A673 (cell line): ENCODE measurements at regions of chr2 and their contacts with region 1.

Region 1: GRCh38 chr2:112714836-112715631 is 5.8 kb upstream of the NT5DC4 start:
- DNase-seq: no peak
- H3K4me3 ChIP-seq: no peak overlapping the region
- H3K27ac ChIP-seq: no peak overlapping the region
- H3K4me1 ChIP-seq: no peaks in the 10 kb centered on the region
- H3K27me3 ChIP-seq: no peaks in the 10 kb centered on the region
- CTCF ChIP-seq: no peak

Region 2: DNA sequence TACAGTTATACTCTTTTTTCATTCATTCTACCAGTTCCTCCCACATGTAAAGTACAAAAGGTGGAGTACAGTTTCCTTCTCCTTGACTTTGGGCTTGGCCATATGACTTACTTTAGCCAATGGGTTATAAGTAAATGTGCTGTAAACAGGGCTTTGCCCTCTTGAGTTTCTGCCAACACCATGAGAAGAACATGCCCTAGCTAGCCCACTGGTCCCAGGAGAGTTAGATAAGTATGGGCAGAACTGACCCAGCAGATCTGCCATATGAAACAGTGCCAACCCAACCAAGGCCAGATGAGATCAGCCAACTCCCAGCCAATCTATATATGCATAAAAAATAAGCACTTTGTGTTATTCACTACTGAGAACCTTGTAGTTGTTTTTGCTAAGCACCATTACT is 485.7 kb before region 1 on chr2:
- CTCF ChIA-PET with region 1: no interaction called
- POLR2A ChIA-PET with region 1: interaction called, 10 read pairs
- intact Hi-C with region 1: no loop called
- DNase-seq: peak; percentile 11
- H3K4me3 ChIP-seq: no peak overlapping the region
- H3K27ac ChIP-seq: no peak overlapping the region
- H3K4me1 ChIP-seq: peaks cover 11% of the 10 kb centered on the region
- H3K27me3 ChIP-seq: no peaks in the 10 kb centered on the region
- CTCF ChIP-seq: no peak

Region 3: DNA sequence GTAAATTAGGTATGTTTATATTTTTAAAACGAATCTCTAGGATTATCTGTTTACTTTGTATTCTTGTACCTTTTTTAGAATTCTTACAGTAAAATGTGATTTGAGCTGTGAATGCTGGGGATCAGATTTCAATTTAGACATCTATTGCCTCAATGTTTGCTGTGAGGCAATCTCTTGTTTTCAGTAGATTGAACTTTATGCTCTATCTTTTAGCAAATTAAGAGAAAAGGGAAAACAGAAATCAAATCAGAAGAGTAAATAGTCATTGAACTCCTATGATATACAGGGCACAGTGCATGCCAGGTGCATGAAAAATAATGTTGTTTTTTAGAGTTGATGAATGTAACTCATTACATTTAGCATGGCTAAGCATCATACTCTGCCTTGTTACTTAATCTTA is 400.2 kb before region 1 on chr2:
- CTCF ChIA-PET with region 1: no interaction called
- POLR2A ChIA-PET with region 1: no interaction called
- intact Hi-C with region 1: no loop called
- DNase-seq: no peak
- H3K4me3 ChIP-seq: no peak overlapping the region
- H3K27ac ChIP-seq: no peak overlapping the region
- H3K4me1 ChIP-seq: no peaks in the 10 kb centered on the region
- H3K27me3 ChIP-seq: no peaks in the 10 kb centered on the region
- CTCF ChIP-seq: no peak

Region 4: DNA sequence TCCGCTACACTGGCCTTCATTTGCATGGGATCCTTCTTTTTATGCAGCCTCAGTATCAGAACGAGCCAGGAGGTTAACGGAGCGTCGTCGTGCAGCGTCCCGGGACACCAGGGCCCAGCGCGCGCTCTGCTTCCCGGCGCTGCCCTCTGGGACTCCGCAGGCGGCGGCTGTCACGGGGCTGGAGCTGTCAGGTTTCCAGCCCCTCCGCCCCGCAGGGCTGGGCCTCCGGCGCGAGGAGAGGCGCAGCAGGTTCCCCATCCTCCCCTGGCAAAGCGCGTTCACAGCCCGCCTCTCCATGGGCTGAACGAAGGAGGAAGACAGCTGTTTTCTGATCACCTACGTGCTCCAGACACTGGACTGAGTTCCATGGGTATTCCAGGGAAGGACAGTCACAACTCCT is 576.2 kb after region 1 on chr2:
- CTCF ChIA-PET with region 1: no interaction called
- POLR2A ChIA-PET with region 1: no interaction called
- intact Hi-C with region 1: no loop called
- DNase-seq: no peak
- H3K4me3 ChIP-seq: no peak overlapping the region
- H3K27ac ChIP-seq: no peak overlapping the region
- H3K4me1 ChIP-seq: no peaks in the 10 kb centered on the region
- H3K27me3 ChIP-seq: no peaks in the 10 kb centered on the region
- CTCF ChIP-seq: no peak